WTC11 (cell line): ENCODE measurements at regions of chr19 and their contacts with region 1.

Region 1: GRCh38 chr19:9431475-9431874 is 3.9 kb downstream of the ZNF266 start:
- DNase-seq: peak; percentile 87
- ATAC-seq: peak; percentile 86
- H3K4me3 Mint-ChIP-seq: no peak overlapping the region
- H3K27ac Mint-ChIP-seq: peak overlapping the region; percentile 87; the same call in 1 of the 2 replicates
- H3K4me1 Mint-ChIP-seq: peaks cover 15% of the 10 kb centered on the region
- H3K27me3 Mint-ChIP-seq: no peaks in the 10 kb centered on the region; the same call in 1 of the 2 replicates
- CTCF ChIP-seq: peak; percentile 84

Region 2: GRCh38 chr19:9205501-9206113 is 225.9 kb before region 1 on chr19:
- CTCF ChIA-PET with region 1: interaction called, 11 read pairs
- POLR2A ChIA-PET with region 1: no interaction called
- DNase-seq: peak; percentile 79
- ATAC-seq: peak; percentile 73
- H3K4me3 Mint-ChIP-seq: no peak overlapping the region
- H3K27ac Mint-ChIP-seq: no peak overlapping the region
- H3K4me1 Mint-ChIP-seq: no peaks in the 10 kb centered on the region
- H3K27me3 Mint-ChIP-seq: peaks cover 7% of the 10 kb centered on the region; the same call in 1 of the 2 replicates
- CTCF ChIP-seq: peak; percentile 57

Region 3: DNA sequence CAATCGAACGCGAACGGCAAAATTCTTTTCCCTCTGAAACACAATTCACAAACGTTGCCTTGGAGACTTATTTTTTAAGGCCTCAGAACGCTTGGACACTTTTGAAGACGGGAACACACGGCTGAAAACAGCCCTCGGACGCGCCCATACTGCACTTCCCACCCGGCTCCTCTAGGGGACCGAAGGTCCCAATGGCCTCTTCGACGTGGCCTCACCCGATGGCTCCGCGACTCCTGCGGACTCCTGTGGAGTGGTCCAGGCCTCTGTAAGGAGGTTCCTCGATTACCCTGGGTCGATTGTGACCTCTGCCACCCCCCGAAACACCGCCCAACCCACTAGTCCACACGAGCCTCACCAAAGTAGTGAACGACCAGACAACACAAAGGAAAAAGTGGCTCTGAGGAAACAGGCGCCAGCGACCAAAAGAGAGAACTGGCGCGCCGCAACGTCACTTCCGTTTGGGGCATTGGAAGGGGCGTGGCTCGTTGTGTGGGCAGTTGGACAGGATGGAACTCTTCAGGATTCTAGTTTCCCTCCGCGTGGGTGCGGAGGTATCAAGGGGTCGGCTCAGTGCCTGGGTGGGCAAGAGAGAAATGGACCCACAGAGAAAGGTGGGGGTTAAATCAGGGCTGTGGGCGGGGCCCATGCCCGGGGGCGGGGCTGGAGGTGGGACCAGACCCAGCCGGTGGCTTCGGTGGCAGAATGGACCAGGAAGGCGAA is 66.9 kb after region 1 on chr19 and contains the start of gene ZNF560:
- CTCF ChIA-PET with region 1: no interaction called
- POLR2A ChIA-PET with region 1: no interaction called
- DNase-seq: peak; percentile 59
- ATAC-seq: peak; percentile 89
- H3K4me3 Mint-ChIP-seq: peak within 1 kb of the TSS; percentile 78
- H3K27ac Mint-ChIP-seq: peak within 1 kb of the TSS; percentile 88; the same call in 1 of the 2 replicates
- H3K4me1 Mint-ChIP-seq: no peaks in the 10 kb centered on the region
- H3K27me3 Mint-ChIP-seq: peaks cover 15% of the 10 kb centered on the region
- CTCF ChIP-seq: peak; percentile 55; the same call in 1 of the 2 replicates
- total RNA-seq, gene ZNF560: 4.4 to 5.8 TPM (median 4.9 TPM) in 3 replicates